ENCODE measurements at regions of chr17 and their contacts with region 1.

Region 1: DNA sequence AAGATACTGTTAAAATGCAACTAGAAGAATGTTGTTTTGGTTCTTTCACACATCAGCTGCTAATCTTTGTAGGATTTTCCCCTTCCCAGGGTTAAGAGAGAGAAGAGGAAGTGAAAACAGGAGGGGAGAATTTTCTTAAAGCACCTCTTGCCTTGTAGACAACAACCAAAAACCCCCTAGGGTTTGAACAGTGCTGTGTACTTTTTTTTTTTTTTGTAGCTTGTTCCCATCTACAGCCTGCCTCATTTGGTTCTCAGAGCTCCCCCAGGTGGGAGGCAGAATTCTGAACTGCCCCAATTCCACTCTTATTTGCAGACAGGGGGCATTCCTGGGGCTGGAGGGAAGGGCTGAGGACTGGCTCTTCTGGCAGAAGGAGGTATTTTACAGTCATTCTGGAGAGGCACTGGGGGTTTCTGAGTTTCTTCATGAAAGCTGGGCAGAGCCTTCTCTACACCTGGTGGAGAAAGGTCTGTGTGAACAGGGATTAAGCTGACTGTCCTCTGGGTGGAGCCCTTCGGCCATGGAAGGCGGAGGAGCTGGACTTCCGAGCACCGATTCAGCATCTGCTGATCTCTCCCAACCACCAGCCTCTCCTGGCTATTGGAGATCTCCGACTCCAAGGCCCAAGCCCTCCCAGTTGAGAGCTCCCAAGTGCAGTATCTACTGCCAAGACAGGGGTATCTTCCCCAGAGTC is 32.2 kb downstream of the SMARCE1 start:
- DNase-seq: peak; percentile 100
- H3K4me3 Mint-ChIP-seq: no peak overlapping the region
- H3K27ac Mint-ChIP-seq: no peak overlapping the region
- H3K4me1 Mint-ChIP-seq: peaks cover 26% of the 10 kb centered on the region
- H3K27me3 Mint-ChIP-seq: peaks cover 97% of the 10 kb centered on the region
- CTCF ChIP-seq: no peak

Region 2: DNA sequence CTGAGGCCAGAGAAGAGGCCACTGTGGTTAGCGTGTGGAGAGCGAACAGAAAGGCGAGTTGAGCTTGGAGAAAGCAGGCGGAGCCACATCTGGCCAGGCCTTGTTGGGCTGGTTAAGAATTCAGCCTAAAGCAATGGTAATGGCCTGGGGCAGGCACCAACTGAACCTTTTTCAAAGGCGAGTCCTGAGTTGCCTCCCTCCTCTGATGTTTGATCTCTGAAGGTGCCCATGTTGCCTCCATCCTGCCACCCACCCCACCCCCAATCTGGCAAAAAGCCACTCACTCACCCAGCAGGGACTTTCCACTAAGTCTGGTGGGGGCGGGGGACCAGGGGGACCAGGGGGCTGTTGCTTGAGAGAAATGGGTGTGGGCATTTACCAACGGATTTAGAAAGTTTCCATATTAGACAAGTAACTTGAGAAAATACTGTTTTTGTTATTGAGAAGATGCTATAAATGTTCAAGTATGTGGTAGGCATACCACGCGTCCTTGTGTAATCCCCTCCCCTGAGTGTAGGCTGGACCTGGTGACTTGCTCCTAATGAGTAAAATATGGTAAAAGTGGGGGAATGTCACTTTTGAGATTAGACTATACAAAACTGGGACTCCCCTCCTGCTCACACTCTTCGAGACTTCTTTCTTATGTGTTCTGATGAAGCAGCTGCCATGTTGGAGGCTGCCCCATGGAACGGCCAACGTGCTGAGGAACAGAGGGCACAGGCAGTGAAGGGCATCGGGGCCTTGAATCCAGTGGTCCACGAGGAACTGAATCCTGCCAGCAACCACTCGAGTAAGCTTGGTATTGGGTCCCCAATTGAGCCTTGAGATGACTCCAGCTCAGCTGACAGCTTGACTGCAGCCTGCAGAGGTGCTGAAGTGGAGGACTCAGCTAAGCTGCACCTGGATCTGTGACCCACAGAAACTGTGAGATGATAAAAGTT is 84.1 kb before region 1 on chr17:
- CTCF ChIA-PET with region 1: interaction called, 105 read pairs
- intact Hi-C with region 1: no loop called
- DNase-seq: no peak
- H3K4me3 Mint-ChIP-seq: no peak overlapping the region
- H3K27ac Mint-ChIP-seq: no peak overlapping the region
- H3K4me1 Mint-ChIP-seq: peaks cover 19% of the 10 kb centered on the region
- H3K27me3 Mint-ChIP-seq: peaks cover 48% of the 10 kb centered on the region
- CTCF ChIP-seq: no peak

Region 3: DNA sequence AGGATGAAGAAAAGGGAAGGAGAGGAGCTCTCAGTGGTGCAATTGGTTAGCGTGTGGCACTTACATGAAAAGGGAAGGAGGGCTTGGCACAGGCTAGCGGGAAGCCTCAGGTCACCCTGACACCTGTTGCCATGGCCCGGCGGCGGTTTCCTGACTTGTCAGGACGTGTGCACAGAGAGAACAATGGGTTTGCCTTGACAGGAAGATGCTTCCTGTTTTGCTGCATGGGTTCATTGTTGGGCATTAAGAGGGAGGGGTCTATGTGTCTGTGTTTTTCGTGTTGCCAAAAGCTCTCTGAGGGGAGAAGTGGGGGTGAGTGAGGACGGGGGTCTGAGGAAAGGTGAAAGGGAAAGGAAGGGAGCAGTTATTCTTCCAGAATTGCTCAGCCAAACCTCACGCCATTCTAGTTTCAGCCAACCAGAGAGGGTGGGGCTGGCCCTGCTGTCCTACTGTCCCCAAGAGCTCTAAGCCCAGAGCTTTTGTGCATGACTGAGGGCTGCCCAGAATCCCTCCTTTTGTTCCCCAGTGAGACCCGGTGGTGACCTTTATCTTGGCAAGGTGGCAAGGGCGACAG is 33.0 kb before region 1 on chr17:
- CTCF ChIA-PET with region 1: interaction called, 24 read pairs
- intact Hi-C with region 1: no loop called
- DNase-seq: peak; percentile 60
- H3K4me3 Mint-ChIP-seq: no peak overlapping the region
- H3K27ac Mint-ChIP-seq: no peak overlapping the region
- H3K4me1 Mint-ChIP-seq: peaks cover 8% of the 10 kb centered on the region
- H3K27me3 Mint-ChIP-seq: peaks cover 93% of the 10 kb centered on the region
- CTCF ChIP-seq: no peak

Region 4: DNA sequence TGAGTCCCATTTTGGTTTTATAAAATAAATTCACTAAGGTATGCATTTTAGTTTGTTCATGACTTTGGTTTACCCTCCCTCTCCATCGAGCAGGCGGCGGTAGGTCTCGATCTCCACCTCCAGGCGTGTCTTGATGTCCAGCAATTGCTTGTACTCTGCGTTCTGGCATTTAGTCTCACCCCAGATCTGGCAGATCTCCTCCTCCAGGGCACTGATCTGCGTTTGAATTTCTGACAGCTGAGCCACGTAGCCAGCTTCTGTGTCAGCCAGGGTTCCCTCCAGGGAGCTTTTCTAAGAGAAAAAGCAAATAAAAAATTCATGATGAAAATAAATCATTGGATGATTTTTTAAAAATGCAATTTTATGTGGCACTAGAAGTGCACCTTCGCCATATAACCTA is 83.9 kb after region 1 on chr17:
- CTCF ChIA-PET with region 1: interaction called, 79 read pairs
- intact Hi-C with region 1: no loop called
- DNase-seq: no peak
- H3K4me3 Mint-ChIP-seq: no peak overlapping the region
- H3K27ac Mint-ChIP-seq: no peak overlapping the region
- H3K4me1 Mint-ChIP-seq: peaks cover 46% of the 10 kb centered on the region
- H3K27me3 Mint-ChIP-seq: peaks cover 29% of the 10 kb centered on the region
- CTCF ChIP-seq: no peak

Region 5: GRCh38 chr17:40750391-40750790 is 134.9 kb after region 1 on chr17:
- CTCF ChIA-PET with region 1: interaction called, 12 read pairs
- intact Hi-C with region 1: no loop called
- DNase-seq: no peak
- H3K4me3 Mint-ChIP-seq: no peak overlapping the region
- H3K27ac Mint-ChIP-seq: no peak overlapping the region
- H3K4me1 Mint-ChIP-seq: no peaks in the 10 kb centered on the region
- H3K27me3 Mint-ChIP-seq: peaks cover 77% of the 10 kb centered on the region
- CTCF ChIP-seq: no peak

Region 6: DNA sequence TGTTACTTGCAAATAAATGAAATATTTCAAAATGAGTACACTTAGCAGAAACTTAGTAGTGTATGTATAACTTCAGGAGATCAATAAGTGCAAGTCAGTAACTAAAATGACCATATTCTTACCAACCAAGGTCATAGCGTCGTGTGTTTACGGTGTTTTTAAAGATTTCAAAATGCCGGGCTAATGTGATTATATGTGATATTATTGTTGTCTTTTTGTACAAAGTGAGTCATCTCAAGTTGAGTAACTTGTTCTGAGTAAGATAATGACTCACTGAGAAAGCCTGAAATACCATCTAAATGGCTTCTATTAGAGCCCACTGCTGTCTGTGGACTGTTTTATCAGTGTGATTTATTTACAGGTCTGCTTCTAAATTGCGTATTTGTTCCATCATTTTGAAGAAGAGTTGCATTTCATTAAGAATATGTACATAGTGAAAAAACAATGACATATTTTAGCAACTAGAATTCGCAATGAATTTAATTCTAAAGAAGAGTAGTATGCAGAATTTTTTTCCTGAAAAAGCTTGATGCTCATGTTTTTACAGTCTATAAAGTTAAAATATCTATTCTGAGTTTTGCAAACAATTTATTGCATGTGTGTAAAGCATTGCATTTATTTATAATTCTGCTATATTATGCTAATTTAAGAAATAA is 238.8 kb after region 1 on chr17:
- CTCF ChIA-PET with region 1: interaction called, 27 read pairs
- intact Hi-C with region 1: loop called (anchors 1 kb)
- DNase-seq: no peak
- H3K4me3 Mint-ChIP-seq: peak overlapping the region; percentile 33
- H3K27ac Mint-ChIP-seq: peak overlapping the region; percentile 86
- H3K4me1 Mint-ChIP-seq: peaks cover 85% of the 10 kb centered on the region
- H3K27me3 Mint-ChIP-seq: no peaks in the 10 kb centered on the region
- CTCF ChIP-seq: no peak